Gastrocnemius medialis (tissue), 4 donors: ENCODE measurements at regions of chr5 and their contacts with region 1.

Region 1: DNA sequence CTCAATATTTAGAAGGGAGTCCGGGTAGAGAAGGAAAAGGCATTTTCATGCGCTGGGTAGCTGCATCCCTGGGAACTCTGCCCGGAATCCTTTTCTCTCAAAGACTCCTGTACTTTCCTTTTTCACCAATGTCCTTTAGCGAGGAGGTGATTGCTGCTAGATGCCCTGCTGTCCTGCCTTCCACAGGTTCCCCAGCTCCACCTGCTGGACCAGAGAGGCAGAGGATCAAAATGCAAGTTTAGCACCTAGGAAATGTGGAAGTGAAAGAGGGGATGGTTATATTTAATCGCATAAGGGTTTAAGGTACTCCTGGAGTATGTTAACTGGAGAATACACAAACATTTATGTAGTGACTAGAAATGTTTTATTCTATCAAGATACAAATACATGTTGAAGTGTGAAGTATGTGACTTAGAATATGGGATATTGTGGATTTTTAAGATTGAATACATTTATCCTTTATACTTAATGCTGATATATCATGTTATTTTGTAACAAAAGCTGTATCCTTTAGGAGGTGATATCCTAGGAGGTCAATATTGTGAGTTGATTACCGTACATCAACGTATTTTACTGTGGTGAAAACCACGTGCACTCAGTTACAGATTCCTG is 145.7 kb downstream of the ARHGAP26 start:
- DNase-seq: no peak
- ATAC-seq: no peak
- H3K4me3 ChIP-seq: no peak overlapping the region
- H3K27ac ChIP-seq: peak overlapping the region in 1 of 4 donors; percentile 9
- H3K4me1 ChIP-seq: no peaks in the 10 kb centered on the region
- H3K27me3 ChIP-seq: no peaks in the 10 kb centered on the region
- CTCF ChIP-seq: no peak
- POLR2A ChIP-seq: no peak

Region 2: DNA sequence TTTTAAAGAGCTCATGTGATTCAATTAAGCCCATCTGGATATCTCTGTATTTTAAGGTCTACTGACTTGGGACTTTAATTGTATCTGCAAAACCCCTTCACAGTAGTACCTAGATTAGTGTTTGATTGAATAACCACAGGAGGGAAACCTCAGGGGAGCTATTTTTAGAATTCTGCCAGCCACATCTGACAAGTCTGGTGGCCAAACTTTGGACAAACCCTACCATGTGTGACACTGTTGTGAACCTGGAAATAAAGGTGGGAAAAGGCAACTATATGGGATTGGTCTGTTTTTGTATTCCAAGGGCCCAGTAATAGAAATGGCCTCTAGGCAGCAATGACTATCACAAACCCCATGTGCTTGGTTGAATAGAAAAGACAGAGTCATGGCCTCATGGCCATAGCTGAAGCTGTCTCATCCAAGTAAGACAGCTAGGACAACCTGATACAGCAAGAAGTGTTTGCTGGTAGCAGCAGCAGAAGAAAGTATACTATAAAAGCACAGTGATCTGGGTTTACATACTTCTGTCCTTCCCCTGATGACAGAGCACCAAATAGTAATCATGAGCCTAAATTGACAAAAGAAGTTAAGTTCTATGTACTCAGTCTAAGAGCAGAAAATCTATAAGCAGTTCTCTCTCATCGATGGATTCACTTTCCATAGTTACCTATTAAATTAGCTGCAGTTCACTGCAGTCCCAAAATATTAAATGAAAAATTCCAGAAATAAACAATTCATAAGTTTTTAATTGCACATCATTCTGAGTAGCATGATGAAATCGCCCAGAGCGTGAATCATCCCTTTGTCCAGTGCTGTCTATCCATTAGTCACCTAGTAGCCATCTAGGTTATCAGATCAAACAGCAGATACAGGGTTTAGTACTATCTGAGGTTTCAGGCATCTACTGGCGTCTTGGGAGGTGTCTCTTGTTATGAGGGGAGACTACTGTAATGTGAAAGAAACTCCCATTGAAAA is 44.1 kb after region 1 on chr5:
- in situ Hi-C with region 1: loop called in 1 of 4 experiments (anchors 5 kb)
- intact Hi-C with region 1: no loop called
- DNase-seq: no peak
- ATAC-seq: peak; percentile 36 to 51
- H3K4me3 ChIP-seq: no peak overlapping the region
- H3K27ac ChIP-seq: peak overlapping the region in 1 of 4 donors; percentile 6
- H3K4me1 ChIP-seq: peaks cover 40 to 47% of the 10 kb centered on the region in 2 donors
- H3K27me3 ChIP-seq: no peaks in the 10 kb centered on the region
- CTCF ChIP-seq: no peak
- POLR2A ChIP-seq: no peak

Region 3: DNA sequence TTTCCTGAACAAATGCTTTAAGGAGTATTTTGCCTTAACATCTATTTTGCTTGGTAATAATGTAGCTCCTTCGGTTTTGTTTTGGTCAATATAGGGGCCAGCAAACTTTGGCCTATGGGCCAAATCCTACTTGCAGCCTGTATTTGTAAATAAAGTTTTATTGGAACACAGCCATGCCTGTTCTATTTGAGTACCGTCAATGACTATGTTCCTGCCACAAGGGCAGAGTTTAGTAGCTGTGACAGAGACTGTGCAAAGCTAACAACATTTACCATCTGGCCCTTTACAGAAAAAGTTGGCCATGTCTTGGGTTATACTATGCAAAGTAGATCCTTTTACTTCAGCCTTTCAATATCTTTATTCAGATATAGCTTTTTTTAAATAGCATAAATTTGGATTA is 374.2 kb after region 1 on chr5:
- in situ Hi-C with region 1: no loop called
- intact Hi-C with region 1: no loop called
- DNase-seq: no peak
- ATAC-seq: no peak
- H3K4me3 ChIP-seq: no peak overlapping the region
- H3K27ac ChIP-seq: no peak overlapping the region
- H3K4me1 ChIP-seq: no peaks in the 10 kb centered on the region
- H3K27me3 ChIP-seq: no peaks in the 10 kb centered on the region
- CTCF ChIP-seq: no peak
- POLR2A ChIP-seq: no peak

Region 4: GRCh38 chr5:143837306-143837848 is 921.5 kb after region 1 on chr5:
- in situ Hi-C with region 1: loop called in 1 of 4 experiments (anchors 10 kb)
- intact Hi-C with region 1: no loop called
- DNase-seq: no peak
- ATAC-seq: no peak
- H3K4me3 ChIP-seq: no peak overlapping the region
- H3K27ac ChIP-seq: no peak overlapping the region
- H3K4me1 ChIP-seq: no peaks in the 10 kb centered on the region
- H3K27me3 ChIP-seq: no peaks in the 10 kb centered on the region
- CTCF ChIP-seq: no peak
- POLR2A ChIP-seq: no peak